ENCODE measurements at regions of chr20 and their contacts with region 1.

Region 1: GRCh38 chr20:52127309-52127708 is 64.3 kb downstream of the ZFP64 start:
- DNase-seq: no peak
- H3K4me3 Mint-ChIP-seq: no peak overlapping the region
- H3K27ac Mint-ChIP-seq: no peak overlapping the region
- H3K4me1 Mint-ChIP-seq: no peaks in the 10 kb centered on the region
- H3K27me3 Mint-ChIP-seq: no peaks in the 10 kb centered on the region

Region 2: DNA sequence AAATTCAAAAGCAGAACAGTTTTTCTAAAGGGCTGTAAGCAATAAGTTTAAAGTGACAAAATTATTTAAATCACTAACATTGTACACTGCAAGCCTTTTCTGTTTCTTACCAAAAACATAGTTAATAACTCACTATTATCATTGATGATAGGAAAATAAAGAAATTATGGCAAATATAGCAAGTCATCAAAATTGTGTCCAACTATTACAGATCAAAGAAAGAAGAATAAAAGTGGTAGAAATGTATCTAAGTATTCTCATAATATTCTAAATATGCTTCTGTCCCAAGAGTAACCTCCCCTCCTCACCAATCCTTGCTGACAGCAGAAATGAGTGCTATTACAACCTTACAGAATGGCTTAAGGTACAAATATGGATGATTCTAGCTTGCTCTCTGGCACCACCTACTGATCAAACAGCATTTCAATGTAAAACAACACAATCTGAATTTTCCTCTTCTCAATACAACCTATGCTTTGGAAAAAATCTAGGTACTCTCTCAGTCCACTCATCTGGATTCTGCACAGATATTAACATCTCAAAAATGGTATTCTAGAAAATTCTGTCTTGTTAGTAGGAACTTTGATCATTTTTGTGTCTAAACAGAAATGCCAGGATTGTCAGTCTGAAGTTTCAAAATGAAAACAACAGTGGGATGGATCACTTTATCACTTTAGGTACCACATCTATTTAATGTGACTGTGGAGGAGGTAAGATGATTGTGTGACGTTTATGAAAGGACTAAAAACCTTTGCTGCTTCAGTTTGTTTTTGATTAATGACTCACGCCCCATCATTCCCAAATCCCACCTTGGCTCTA is 23.3 kb after region 1 on chr20:
- CTCF ChIA-PET with region 1: interaction called, 11 read pairs
- intact Hi-C with region 1: loop called (anchors 1 kb)
- DNase-seq: peak; percentile 52
- H3K4me3 Mint-ChIP-seq: no peak overlapping the region
- H3K27ac Mint-ChIP-seq: no peak overlapping the region
- H3K4me1 Mint-ChIP-seq: no peaks in the 10 kb centered on the region
- H3K27me3 Mint-ChIP-seq: no peaks in the 10 kb centered on the region

Region 3: DNA sequence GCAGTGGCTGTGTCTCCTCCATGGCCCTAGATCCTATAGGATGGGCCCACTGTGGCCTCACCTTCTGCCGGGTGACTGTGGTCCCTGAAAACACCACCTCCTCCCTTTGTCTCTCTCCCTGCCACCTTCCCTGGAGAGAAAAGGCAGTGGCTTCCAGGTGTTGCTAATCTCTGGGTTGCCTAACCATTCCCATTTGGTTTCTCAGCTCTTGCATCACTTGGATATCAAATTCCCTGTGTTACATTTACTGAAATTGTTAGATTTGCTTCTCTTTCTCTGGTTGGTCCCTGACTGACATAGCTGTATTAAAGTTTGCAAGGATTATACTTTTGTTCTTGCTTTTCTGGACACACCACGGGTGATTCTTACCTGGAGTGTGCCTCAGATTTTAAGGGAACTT is 73.6 kb after region 1 on chr20:
- CTCF ChIA-PET with region 1: interaction called, 6 read pairs
- intact Hi-C with region 1: loop called (anchors 2 kb)
- DNase-seq: no peak
- H3K4me3 Mint-ChIP-seq: no peak overlapping the region
- H3K27ac Mint-ChIP-seq: no peak overlapping the region
- H3K4me1 Mint-ChIP-seq: no peaks in the 10 kb centered on the region
- H3K27me3 Mint-ChIP-seq: no peaks in the 10 kb centered on the region

Region 4: GRCh38 chr20:52242237-52243230 is 115.2 kb after region 1 on chr20:
- CTCF ChIA-PET with region 1: interaction called, 3 read pairs
- intact Hi-C with region 1: loop called (anchors 2 kb)
- DNase-seq: no peak
- H3K4me3 Mint-ChIP-seq: no peak overlapping the region
- H3K27ac Mint-ChIP-seq: no peak overlapping the region
- H3K4me1 Mint-ChIP-seq: no peaks in the 10 kb centered on the region
- H3K27me3 Mint-ChIP-seq: no peaks in the 10 kb centered on the region

Region 5: DNA sequence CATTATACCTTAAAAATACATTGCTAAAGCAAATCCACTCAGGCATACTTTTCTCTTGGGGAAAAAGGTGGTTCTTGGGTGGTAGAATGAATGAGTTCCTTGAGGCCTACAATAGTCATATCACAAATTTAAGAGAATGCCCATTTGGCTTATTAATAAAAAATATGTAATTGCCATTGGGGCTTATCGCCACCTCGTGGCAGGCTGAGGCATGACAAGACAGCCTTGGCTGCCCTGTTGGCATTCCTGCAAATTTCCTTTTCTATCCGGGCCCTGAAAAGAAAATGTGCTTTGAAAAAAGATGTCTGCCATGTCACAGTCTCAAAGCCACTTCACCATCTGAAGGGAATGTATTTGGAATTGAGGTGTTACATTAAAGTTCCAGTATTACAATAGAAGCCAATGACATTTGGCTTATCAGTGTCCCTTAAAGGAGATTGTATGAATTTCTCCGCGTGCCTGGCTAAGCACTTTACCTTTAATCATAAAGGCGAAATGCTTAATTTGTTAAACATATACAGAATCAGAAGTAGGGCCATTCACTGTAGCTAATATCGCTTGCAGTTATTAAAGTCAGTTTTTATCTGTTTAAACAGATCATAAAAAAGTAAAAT is 252.5 kb after region 1 on chr20:
- CTCF ChIA-PET with region 1: no interaction called
- intact Hi-C with region 1: loop called (anchors 2 kb)
- DNase-seq: peak; percentile 52
- H3K4me3 Mint-ChIP-seq: no peak overlapping the region
- H3K27ac Mint-ChIP-seq: no peak overlapping the region
- H3K4me1 Mint-ChIP-seq: peaks cover 14% of the 10 kb centered on the region
- H3K27me3 Mint-ChIP-seq: no peaks in the 10 kb centered on the region

Measured in activated naive CD4-positive, alpha-beta T cell treated with anti-CD3 and anti-CD28 coated beads for 36 hours (primary cell).